ENCODE measurements at regions of chr11 and their contacts with region 1.

Region 1: GRCh38 chr11:129695575-129696308 is 119.9 kb upstream of the TMEM45B start:
- DNase-seq: peak; percentile 70
- H3K4me3 ChIP-seq: peak overlapping the region in 1 of 2 experiments; percentile 33; a peak in 2 of 4 replicates
- H3K27ac ChIP-seq: no peak overlapping the region
- H3K4me1 ChIP-seq: peaks cover 0 to 4% of the 10 kb centered on the region in 2 experiments; a peak in 2 of 4 replicates
- H3K27me3 ChIP-seq: no peaks in the 10 kb centered on the region
- CTCF ChIP-seq: peak; percentile 52
- EP300 ChIP-seq: no peak
- RAD21 ChIP-seq: peak; percentile 47

Region 2: DNA sequence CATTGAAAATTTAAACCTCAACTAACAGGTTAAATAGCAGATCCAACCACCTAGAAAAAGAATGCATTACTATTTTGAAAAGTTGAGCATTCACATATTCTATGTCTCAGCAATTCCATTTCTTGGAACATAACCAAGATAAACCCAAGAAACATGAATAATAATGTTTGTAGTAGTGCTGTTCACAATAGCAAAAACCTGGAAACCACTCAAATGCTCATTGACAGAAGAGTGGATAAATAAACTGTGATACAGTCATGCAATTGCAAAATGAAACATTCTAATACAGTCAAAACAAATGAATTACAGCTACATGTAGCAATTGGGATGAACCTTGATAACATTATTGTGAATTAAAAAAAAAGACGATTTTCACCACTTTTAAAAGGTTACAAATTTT is 42.9 kb before region 1 on chr11:
- CTCF ChIA-PET with region 1: no interaction called
- POLR2A ChIA-PET with region 1: no interaction called
- DNase-seq: no peak
- H3K4me3 ChIP-seq: no peak overlapping the region
- H3K27ac ChIP-seq: no peak overlapping the region
- H3K4me1 ChIP-seq: no peaks in the 10 kb centered on the region
- H3K27me3 ChIP-seq: no peaks in the 10 kb centered on the region
- CTCF ChIP-seq: no peak
- EP300 ChIP-seq: no peak
- RAD21 ChIP-seq: no peak

Region 3: DNA sequence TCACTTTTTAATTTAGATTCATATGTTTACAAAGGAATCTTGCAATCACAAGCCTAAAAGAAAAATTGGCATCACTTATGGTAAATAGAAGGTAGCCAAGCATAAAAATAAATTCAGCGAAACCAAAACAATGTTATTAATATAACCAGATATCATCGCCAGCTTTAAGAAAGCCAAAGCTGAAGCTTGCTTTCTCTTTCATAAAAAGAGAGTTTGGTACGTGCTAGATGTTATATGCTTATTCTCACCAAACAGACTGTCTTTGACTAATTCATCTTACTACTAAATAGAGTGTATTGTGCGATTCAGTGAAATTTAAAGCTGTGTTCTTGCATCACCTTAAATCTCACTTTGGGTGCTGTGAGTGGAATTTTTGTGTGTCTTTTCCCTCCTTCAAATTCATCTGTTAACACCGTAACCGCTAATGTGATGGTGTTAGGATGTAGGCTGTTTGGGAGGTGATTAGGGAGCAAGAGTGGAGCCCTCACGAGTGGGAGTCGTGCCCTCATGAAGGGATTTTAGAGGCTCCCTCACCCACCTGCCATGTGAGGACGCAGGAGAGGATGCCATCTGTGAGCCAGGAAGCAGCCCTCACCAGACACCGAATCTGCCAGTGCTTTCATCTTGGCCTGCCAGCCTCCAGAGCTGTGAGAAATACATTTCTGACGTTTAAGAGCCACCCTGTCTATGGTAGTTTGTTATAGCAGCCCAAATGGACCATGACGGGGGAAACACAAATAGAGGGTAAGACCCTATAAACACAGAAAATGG is 14.2 kb before region 1 on chr11:
- CTCF ChIA-PET with region 1: interaction called, 10 read pairs
- POLR2A ChIA-PET with region 1: no interaction called
- DNase-seq: no peak
- H3K4me3 ChIP-seq: no peak overlapping the region
- H3K27ac ChIP-seq: no peak overlapping the region
- H3K4me1 ChIP-seq: no peaks in the 10 kb centered on the region
- H3K27me3 ChIP-seq: no peaks in the 10 kb centered on the region
- CTCF ChIP-seq: no peak
- EP300 ChIP-seq: no peak
- RAD21 ChIP-seq: no peak

Measured in SK-N-SH (cell line).